ENCODE measurements at regions of chr3 and their contacts with region 1.

Region 1: DNA sequence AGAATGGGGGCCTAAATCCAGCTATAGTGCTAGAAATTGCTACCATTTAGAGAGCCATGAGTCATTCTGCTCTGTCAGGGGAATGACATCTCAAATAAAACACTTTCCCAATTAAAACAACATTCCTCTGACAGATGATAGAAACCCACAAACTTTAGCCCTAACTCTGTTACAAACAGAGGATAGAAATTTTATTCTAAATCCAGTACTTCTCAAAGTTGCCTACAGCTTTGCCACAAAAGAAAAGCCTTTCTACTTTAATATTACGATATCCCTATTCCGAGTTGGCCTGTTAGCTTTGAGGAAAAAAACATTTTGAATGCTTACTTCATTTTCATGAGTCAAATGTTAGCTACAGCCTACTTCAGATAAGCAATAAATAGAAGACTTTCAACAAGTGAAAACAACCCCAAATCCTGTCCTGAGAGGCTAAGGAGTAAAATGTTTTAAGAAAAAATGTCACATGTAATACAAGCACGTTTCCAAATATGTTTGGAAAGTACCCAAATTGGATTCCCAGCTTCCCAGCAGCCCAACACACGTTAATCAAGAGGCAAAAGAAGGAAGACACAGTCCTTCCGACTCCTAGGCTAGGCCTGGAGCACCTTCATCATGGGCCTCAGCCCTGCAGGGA is 83.6 kb downstream of the ATP1B3 start:
- DNase-seq: no peak
- H3K4me3 Mint-ChIP-seq: no peak overlapping the region
- H3K27ac Mint-ChIP-seq: no peak overlapping the region
- H3K4me1 Mint-ChIP-seq: peaks cover 4% of the 10 kb centered on the region
- H3K27me3 Mint-ChIP-seq: no peaks in the 10 kb centered on the region

Region 2: DNA sequence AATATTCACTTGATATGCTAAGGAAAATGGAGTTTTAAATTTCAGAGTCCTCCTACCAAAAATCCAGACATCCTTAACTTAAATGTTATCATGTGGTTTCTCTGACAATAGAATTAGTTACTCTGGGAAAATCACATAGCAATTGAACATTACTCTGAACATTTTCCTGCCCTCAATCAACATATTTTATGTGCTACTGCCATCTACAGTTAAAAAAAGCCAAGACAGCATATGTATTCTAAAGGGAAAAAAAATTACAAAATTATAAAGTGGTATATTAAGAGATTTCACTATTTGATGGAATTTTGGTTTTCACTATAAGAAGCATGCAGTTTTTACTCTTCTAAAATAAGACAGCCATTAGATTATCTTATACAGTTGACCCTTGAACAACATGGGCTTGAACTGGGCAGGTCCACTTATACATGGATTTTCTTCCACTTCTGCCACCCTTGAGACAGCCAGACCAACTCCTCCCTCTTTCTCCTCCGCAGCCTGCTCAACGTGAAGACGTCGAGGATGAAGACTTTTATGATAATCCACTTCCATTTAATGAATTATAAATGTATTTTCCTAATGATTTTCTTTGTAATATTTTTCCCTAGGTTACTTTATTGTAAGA is 38.7 kb after region 1 on chr3:
- intact Hi-C with region 1: loop called (anchors 2 kb)
- DNase-seq: no peak
- H3K4me3 Mint-ChIP-seq: no peak overlapping the region
- H3K27ac Mint-ChIP-seq: no peak overlapping the region
- H3K4me1 Mint-ChIP-seq: no peaks in the 10 kb centered on the region
- H3K27me3 Mint-ChIP-seq: no peaks in the 10 kb centered on the region

Measured in activated T-helper 2 cell treated with anti-CD3 and anti-CD28 coated beads, Interferon-gamma antibody, Interleukin-2, Interleukin-4, amounts not matched to agents 10 μg/mL and 5 μg/mL and 100 μg/mL, durations not matched to agents 14 hours and 24 hours and 36 hours (primary cell).